GM18951 (cell line): ENCODE measurements at regions of chr10 and their contacts with region 1.

Region 1: DNA sequence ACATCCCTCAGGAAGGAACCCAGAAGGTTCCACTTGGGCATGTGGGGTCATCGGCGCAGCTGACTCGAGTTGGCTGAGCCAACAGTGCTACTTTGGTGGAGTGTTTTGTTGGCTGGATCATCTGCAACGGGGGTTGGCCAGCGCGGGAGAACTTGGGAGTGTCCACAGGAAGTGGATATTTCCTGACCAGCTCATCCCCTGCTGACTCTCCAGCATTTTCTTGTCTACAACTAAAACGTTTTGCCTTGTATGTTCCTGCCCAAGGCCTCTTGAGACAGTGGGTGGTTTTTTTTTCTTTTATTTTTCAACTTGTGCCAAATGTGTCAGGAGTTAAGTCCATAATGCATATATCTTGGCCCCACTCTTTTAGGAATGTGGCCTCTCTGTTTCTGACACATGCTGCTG is 208.6 kb downstream of the ZNF365 start:
- POLR2A ChIP-seq: no peak

Region 2: GRCh38 chr10:62354916-62355315 is 227.9 kb before region 1 on chr10:
- in situ Hi-C with region 1: no loop called
- POLR2A ChIP-seq: no peak

Region 3: DNA sequence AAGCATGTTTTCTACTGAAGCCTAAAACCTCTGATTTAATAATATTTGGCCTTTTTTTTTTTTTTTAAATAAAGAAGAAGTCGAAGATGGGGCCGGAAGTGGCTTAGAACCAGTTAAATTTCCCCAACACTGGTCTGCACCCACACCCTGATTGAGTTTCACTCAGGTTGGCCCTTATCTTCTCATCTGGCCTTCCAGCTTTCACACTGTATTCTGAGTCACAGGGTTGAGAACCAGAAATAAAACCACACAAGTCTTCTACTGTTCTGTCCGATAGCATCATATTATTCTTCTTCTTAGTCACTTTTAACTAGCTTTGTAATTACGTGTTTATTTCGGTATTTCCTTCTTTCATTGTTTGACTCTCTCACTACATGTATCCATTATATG is 198.8 kb before region 1 on chr10:
- in situ Hi-C with region 1: no loop called
- POLR2A ChIP-seq: no peak

Region 4: DNA sequence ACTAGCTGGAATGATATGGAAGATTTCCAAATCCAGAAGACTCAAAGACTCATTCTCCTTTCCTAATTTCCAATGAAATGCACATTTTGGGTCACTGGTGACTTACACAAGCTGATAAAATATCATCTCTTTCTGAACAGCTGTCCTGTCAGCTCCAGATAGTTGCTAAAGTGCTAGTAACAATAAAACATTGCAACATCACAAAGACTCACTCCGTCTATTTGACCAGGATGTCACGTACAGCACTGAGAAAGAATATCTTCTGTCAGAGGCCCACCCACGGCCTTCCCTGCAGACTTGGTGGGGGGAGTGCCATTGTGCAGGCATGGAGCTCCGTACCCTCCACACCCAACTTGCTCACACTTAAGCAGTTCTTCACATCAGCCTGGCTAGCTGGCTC is 312.3 kb after region 1 on chr10:
- in situ Hi-C with region 1: no loop called
- POLR2A ChIP-seq: no peak

Region 5: DNA sequence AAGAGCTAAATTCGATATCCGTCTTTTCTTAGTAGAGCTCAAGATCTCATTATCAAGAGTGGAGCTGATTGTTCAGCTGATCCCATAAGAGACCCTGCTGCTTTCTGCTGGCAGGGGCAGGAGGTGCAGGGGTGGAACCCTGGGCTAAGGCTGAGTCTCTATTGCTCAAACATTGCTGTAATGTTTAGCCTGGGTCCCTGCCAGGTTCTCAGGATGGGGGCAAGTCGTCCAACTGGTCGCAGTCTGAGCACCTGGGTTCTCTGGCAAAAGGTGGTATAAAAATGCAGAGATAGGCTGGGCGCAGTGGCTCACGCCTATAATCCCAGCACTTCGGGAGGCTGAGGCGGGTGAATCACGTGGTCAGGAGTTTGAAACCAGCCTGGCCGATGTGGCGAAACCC is 488.3 kb after region 1 on chr10:
- in situ Hi-C with region 1: loop called (anchors 10 kb)
- POLR2A ChIP-seq: no peak